ENCODE measurements at regions of chr5 and their contacts with region 1.

Region 1: DNA sequence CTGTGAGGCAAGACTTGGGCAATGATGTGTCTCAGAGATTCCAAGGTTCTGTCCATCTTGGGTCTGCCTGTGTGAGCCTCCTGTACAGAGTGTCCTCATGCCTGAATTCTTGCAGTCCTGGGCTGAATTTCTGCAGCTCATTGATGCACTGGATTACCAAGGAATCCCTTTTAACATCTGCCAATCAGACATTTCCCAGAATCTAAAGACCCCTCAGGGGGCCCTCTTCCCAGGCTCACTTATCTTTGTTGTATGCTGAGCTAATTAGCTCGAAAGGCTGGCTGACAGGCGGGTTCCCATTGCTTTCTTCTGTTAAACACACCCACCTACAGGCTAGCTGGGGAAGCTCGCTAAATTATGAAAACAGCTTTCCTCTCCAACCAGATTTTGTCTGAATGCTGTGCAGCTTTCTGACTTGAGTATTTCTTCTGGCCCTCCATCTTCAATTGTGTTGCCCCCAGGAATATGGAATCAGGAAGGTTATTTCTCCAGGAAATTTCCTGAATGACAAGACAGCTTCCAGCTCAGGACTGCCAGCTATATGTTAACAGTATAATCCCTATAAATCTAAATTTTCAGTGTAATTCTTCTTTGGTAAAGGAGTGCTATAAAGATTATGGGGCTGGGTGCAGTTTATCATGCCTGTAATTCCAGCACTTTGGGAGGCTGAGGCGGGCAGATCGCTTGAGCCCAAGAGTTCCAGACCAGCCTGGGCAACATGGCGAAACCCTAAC is at the start of gene LIX1:
- DNase-seq: peak; percentile 78
- H3K4me3 Mint-ChIP-seq: no peak within 1 kb of the TSS
- H3K27ac Mint-ChIP-seq: no peak within 1 kb of the TSS
- H3K4me1 Mint-ChIP-seq: no peaks in the 10 kb centered on the region
- H3K27me3 Mint-ChIP-seq: peaks cover 32% of the 10 kb centered on the region
- total RNA-seq, gene LIX1: not detected in 2 replicates

Region 2: GRCh38 chr5:96790961-96791504 is 351.7 kb before region 1 on chr5:
- intact Hi-C with region 1: no loop called
- DNase-seq: peak; percentile 47
- H3K4me3 Mint-ChIP-seq: no peak overlapping the region
- H3K27ac Mint-ChIP-seq: no peak overlapping the region
- H3K4me1 Mint-ChIP-seq: peaks cover 16% of the 10 kb centered on the region
- H3K27me3 Mint-ChIP-seq: no peaks in the 10 kb centered on the region

Region 3: DNA sequence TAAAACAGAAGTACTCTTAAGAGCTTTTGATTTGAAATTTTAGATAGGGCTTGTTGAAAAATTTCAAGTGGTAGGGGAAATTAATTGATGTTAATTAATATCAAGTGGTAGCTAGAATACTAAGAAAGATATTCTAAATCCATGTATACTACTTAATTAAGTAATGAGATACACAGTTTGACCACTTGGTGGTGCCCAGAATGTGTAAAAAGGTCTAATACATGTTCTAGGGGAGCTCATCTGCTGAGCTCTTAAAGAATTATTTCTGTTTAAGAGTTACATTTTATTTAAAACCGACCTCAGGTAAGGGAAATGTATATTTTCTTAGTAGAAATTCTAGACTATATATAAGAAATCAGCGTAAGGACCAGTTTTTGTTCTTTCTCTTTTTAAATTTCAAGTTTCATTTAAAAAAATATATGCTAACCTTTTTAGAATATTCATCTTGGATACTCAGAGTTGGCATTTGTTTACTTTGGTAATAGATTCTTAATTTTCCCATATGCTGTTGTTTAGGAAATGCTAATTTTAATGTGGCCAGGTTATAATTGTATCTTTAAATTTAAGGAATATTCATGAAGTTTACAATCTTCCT is 145.3 kb before region 1 on chr5:
- intact Hi-C with region 1: loop called (anchors 5 kb)
- DNase-seq: peak; percentile 67
- H3K4me3 Mint-ChIP-seq: no peak overlapping the region
- H3K27ac Mint-ChIP-seq: no peak overlapping the region
- H3K4me1 Mint-ChIP-seq: peaks cover 23% of the 10 kb centered on the region
- H3K27me3 Mint-ChIP-seq: no peaks in the 10 kb centered on the region

Region 4: DNA sequence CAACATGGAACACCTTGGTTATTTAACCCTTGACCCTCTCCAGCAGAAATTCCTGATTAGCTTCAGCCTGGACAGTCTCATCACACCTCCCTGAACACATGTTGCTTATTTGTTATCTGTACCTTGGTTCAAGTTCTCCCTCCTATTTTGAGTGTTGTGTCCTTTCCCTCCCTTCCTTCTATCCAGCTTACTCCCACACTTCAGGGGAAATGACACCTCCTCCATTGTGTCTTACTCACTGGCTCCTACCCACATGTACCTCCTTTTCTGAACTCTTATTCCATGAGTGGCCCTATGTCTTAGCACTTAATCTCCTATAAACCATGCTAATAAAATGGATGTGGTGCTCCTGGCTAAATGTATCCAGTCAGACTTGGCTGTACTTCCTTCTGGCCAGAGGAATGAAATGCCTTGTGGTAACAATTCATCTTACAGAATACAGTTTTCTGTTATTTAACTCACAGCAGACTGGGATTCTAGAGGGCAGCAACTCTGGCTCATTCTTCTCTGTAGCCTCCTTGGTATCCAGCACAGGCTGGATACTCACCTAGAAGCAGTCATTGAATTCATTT is 11.5 kb before region 1 on chr5:
- intact Hi-C with region 1: loop called (anchors 2 kb)
- DNase-seq: no peak
- H3K4me3 Mint-ChIP-seq: no peak overlapping the region
- H3K27ac Mint-ChIP-seq: no peak overlapping the region
- H3K4me1 Mint-ChIP-seq: peaks cover 10% of the 10 kb centered on the region
- H3K27me3 Mint-ChIP-seq: peaks cover 16% of the 10 kb centered on the region

Region 5: DNA sequence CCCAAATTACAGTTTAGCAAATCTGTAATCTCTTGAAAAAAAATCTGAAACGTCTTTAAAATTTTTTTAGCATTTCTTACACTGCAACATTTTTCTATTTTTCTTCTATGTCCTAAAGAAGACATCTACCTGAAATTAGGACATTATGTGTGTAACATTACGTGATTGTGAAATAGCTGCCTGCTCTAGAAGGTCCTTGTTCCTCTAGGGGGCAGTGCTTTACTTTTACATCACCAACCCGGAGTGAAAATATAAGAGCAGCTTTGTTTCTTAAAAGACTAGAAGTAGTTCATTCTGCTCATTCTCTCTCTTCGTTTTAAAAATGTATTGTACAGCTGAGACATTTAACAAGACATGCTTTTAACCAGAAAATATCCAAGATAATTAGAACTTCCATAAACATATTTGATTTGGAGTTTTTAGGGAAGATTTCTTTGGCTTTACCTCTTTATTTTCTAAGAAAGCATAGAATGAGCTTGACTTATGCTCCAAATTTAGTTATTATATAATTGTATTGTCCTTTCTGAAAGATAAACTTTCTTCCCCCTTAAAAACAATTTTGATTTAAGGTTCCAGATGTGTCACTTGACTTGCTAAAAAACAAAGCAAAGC is 88.4 kb after region 1 on chr5:
- intact Hi-C with region 1: no loop called
- DNase-seq: peak; percentile 78
- H3K4me3 Mint-ChIP-seq: no peak overlapping the region
- H3K27ac Mint-ChIP-seq: no peak overlapping the region
- H3K4me1 Mint-ChIP-seq: no peaks in the 10 kb centered on the region
- H3K27me3 Mint-ChIP-seq: peaks cover 6% of the 10 kb centered on the region

Measured in activated CD4-positive, alpha-beta T cell treated with anti-CD3 and anti-CD28 coated beads, Interleukin-2, amount 10 ng/mL, durations not matched to agents 24 days and 14 days (primary cell).